ENCODE measurements at regions of chr16 and their contacts with region 1.

Region 1: GRCh38 chr16:82653550-82654511 is 27.1 kb downstream of the CDH13 start:
- DNase-seq: peak; percentile 72
- ATAC-seq: peak; percentile 77
- H3K4me3 Mint-ChIP-seq: peak overlapping the region; percentile 37
- H3K27ac Mint-ChIP-seq: peak overlapping the region; percentile 88
- H3K4me1 Mint-ChIP-seq: peaks cover 88% of the 10 kb centered on the region
- H3K27me3 Mint-ChIP-seq: peaks cover 2% of the 10 kb centered on the region

Region 2: DNA sequence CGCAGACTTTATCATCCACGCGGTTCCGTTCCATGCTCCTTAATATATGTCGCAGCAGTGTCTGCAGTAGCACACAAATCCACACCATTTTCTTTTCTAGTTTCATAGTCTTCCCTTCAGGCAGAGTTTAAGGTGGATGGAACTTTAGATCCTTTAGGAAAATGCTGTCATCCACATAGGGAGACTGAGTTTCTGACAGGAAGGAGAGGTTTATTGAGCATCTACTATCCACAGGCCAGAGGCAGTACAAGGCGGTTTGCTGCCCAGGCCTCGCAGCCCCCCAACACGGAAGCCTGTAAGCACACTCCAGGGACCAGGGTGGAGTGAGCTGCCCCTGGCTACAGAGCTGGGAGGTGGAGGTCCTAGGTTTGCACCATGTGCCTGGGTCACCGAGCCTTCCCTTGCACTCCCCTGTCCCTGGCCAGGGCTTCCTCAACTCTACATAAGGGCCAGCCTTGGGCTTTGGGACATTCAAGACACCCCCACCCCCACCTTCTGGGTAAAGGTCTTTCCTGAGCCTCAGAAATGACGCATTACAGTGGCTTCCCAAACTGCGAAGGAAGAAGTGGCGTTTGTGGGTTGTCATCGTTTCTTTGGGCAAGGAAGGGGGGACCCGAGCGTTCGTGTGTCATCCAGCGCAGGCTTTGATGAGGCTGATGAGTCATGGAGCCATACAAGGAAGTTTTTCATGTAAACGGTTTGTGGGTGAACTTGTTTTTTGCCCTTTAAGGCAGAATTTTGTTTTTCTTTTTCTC is 1021.3 kb before region 1 on chr16:
- CTCF ChIA-PET with region 1: no interaction called
- POLR2A ChIA-PET with region 1: no interaction called
- intact Hi-C with region 1: loop called (anchors 5 to 10 kb)
- DNase-seq: peak; percentile 90
- ATAC-seq: peak; percentile 81
- H3K4me3 Mint-ChIP-seq: peak overlapping the region; percentile 47
- H3K27ac Mint-ChIP-seq: peak overlapping the region; percentile 97
- H3K4me1 Mint-ChIP-seq: peaks cover 67% of the 10 kb centered on the region
- H3K27me3 Mint-ChIP-seq: no peaks in the 10 kb centered on the region

Region 3: GRCh38 chr16:82192665-82193064 is 461.2 kb before region 1 on chr16:
- CTCF ChIA-PET with region 1: no interaction called
- POLR2A ChIA-PET with region 1: no interaction called
- intact Hi-C with region 1: loop called in 1 of 2 experiments (anchors 1 kb)
- DNase-seq: peak; percentile 65
- ATAC-seq: peak; percentile 98
- H3K4me3 Mint-ChIP-seq: no peak overlapping the region
- H3K27ac Mint-ChIP-seq: peak overlapping the region; percentile 85
- H3K4me1 Mint-ChIP-seq: peaks cover 28% of the 10 kb centered on the region
- H3K27me3 Mint-ChIP-seq: peaks cover 14% of the 10 kb centered on the region

Region 4: GRCh38 chr16:82621796-82622195 is 32.0 kb before region 1 on chr16:
- CTCF ChIA-PET with region 1: no interaction called
- POLR2A ChIA-PET with region 1: no interaction called
- intact Hi-C with region 1: no loop called
- DNase-seq: no peak
- ATAC-seq: no peak
- H3K4me3 Mint-ChIP-seq: no peak overlapping the region
- H3K27ac Mint-ChIP-seq: no peak overlapping the region
- H3K4me1 Mint-ChIP-seq: no peaks in the 10 kb centered on the region
- H3K27me3 Mint-ChIP-seq: peaks cover 41% of the 10 kb centered on the region

Region 5: GRCh38 chr16:82801361-82801760 is 147.5 kb after region 1 on chr16:
- CTCF ChIA-PET with region 1: no interaction called
- POLR2A ChIA-PET with region 1: no interaction called
- intact Hi-C with region 1: loop called in 1 of 2 experiments (anchors 1 kb)
- DNase-seq: peak; percentile 49
- ATAC-seq: peak; percentile 89
- H3K4me3 Mint-ChIP-seq: no peak overlapping the region
- H3K27ac Mint-ChIP-seq: peak overlapping the region; percentile 17
- H3K4me1 Mint-ChIP-seq: peaks cover 9% of the 10 kb centered on the region
- H3K27me3 Mint-ChIP-seq: peaks cover 15% of the 10 kb centered on the region

Region 6: GRCh38 chr16:83807710-83808572 is 1154.1 kb after region 1 on chr16 and contains the start of gene HSBP1:
- CTCF ChIA-PET with region 1: no interaction called
- POLR2A ChIA-PET with region 1: no interaction called
- intact Hi-C with region 1: loop called in 1 of 2 experiments (anchors 5 kb)
- DNase-seq: peak; percentile 97
- ATAC-seq: peak; percentile 98
- H3K4me3 Mint-ChIP-seq: peak within 1 kb of the TSS; percentile 98
- H3K27ac Mint-ChIP-seq: peak within 1 kb of the TSS; percentile 93
- H3K4me1 Mint-ChIP-seq: peaks cover 31% of the 10 kb centered on the region
- H3K27me3 Mint-ChIP-seq: peaks cover under 1% of the 10 kb centered on the region
- total RNA-seq, gene HSBP1: 73.1 to 80.7 TPM